ENCODE measurements at regions of chr3 and their contacts with region 1.

Region 1: GRCh38 chr3:62036726-62037125 is 336.6 kb downstream of the FEZF2 start:
- DNase-seq: no peak
- H3K4me3 ChIP-seq: no peak overlapping the region
- H3K27ac ChIP-seq: no peak overlapping the region
- H3K4me1 ChIP-seq: no peaks in the 10 kb centered on the region
- H3K27me3 ChIP-seq: no peaks in the 10 kb centered on the region
- CTCF ChIP-seq: no peak
- POLR2A ChIP-seq: no peak

Region 2: DNA sequence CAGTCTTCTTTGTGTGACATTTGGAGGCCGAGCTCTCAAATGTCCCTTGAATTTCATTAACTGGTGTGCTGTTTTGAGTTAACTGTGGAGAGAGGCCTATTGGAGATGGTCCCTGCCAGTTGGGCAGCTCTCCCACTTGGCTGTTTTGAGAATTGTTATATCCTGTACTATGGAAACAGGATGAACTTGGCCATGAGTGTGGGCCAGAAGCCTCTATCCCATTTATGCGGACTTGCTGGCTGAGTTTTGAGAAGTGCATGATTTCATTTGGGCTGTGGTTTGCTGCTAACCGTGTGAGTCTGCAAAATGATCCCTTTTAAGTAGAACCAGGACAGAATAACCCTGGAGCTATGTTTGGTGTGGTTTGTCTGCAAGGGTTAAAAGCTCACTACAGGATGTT is 109.4 kb before region 1 on chr3:
- CTCF ChIA-PET with region 1: no interaction called
- POLR2A ChIA-PET with region 1: no interaction called
- dilution Hi-C with region 1: no loop called
- intact Hi-C with region 1: no loop called
- DNase-seq: peak; percentile 41
- H3K4me3 ChIP-seq: no peak overlapping the region
- H3K27ac ChIP-seq: no peak overlapping the region
- H3K4me1 ChIP-seq: peaks cover 11% of the 10 kb centered on the region
- H3K27me3 ChIP-seq: no peaks in the 10 kb centered on the region
- CTCF ChIP-seq: no peak
- POLR2A ChIP-seq: no peak

Region 3: DNA sequence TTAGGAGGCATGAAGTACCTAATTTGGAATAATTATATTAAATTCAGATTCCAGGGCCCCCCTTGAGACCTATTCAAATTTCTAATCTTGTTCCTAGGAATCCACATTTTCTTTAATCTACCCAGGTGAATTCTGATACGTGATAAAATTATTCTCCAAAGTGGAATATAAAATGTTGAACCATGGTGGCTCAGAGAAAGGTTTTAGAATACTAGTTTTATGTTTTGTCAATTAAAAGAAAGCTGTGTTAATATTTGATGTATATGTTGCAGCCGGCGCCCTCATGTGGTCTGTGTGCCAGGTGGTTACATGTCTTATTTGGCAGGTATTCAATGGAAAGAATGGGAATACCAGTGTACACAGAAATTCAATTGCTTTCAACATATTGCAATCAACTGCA is 14.8 kb after region 1 on chr3:
- CTCF ChIA-PET with region 1: interaction called, 12 read pairs
- POLR2A ChIA-PET with region 1: no interaction called
- dilution Hi-C with region 1: no loop called
- intact Hi-C with region 1: no loop called
- DNase-seq: peak; percentile 61
- H3K4me3 ChIP-seq: no peak overlapping the region
- H3K27ac ChIP-seq: no peak overlapping the region
- H3K4me1 ChIP-seq: no peaks in the 10 kb centered on the region
- H3K27me3 ChIP-seq: no peaks in the 10 kb centered on the region
- CTCF ChIP-seq: peak; percentile 44 to 45
- POLR2A ChIP-seq: no peak